SK-N-SH (cell line): ENCODE measurements at regions of chr2 and their contacts with region 1.

Region 1: GRCh38 chr2:74833418-74834233 is at the start of gene HK2:
- DNase-seq: peak; percentile 99
- H3K4me3 ChIP-seq: peak within 1 kb of the TSS; percentile 83 to 85
- H3K27ac ChIP-seq: peak within 1 kb of the TSS; percentile 11 to 77; a peak in 3 of 4 replicates
- H3K4me1 ChIP-seq: peaks cover 0 to 25% of the 10 kb centered on the region in 2 experiments; a peak in 1 of 4 replicates
- H3K27me3 ChIP-seq: no peaks in the 10 kb centered on the region
- CTCF ChIP-seq: no peak
- EP300 ChIP-seq: no peak
- RAD21 ChIP-seq: 0 out of 2 replicates have a peak, but pooled peaks have one; percentile 6
- polyA plus RNA-seq, gene HK2: 13.5 and 15.1 TPM in 2 replicates

Region 2: DNA sequence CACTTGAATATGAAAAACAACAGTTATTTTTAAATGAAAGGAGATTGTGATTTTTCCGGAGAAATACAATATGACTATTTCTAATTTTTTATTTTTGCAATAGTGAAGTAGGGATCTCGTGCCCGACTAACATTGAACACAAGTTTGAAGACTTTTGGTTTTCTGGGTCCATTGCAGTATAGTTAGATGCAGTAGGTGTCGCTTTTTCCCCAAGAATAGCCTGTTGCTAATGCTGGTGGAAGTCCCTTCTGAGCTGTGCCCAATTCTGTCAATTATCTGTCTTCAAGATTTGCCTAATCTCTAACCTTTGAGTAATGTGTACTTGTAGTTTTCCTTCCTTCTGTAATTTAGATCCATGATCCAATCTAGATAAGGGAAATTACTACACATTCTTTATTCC is 143.1 kb before region 1 on chr2:
- CTCF ChIA-PET with region 1: interaction called, 13 read pairs
- POLR2A ChIA-PET with region 1: no interaction called
- DNase-seq: peak; percentile 68
- H3K4me3 ChIP-seq: no peak overlapping the region
- H3K27ac ChIP-seq: no peak overlapping the region
- H3K4me1 ChIP-seq: no peaks in the 10 kb centered on the region; a peak in 1 of 4 replicates
- H3K27me3 ChIP-seq: no peaks in the 10 kb centered on the region
- CTCF ChIP-seq: peak; percentile 92
- EP300 ChIP-seq: no peak
- RAD21 ChIP-seq: peak; percentile 98

Region 3: GRCh38 chr2:74740389-74741075 is 93.1 kb before region 1 on chr2:
- CTCF ChIA-PET with region 1: interaction called, 14 read pairs
- POLR2A ChIA-PET with region 1: interaction called, 3 read pairs
- DNase-seq: no peak
- H3K4me3 ChIP-seq: peak overlapping the region in 1 of 2 experiments; percentile 8; a peak in 1 of 4 replicates
- H3K27ac ChIP-seq: peak overlapping the region; percentile 53 to 62; a peak in 3 of 4 replicates
- H3K4me1 ChIP-seq: peaks cover 24 to 29% of the 10 kb centered on the region in 2 experiments
- H3K27me3 ChIP-seq: no peaks in the 10 kb centered on the region
- CTCF ChIP-seq: no peak
- EP300 ChIP-seq: peak in 1 of 2 experiments; percentile 67; a peak in 1 of 4 replicates
- RAD21 ChIP-seq: no peak

Region 4: DNA sequence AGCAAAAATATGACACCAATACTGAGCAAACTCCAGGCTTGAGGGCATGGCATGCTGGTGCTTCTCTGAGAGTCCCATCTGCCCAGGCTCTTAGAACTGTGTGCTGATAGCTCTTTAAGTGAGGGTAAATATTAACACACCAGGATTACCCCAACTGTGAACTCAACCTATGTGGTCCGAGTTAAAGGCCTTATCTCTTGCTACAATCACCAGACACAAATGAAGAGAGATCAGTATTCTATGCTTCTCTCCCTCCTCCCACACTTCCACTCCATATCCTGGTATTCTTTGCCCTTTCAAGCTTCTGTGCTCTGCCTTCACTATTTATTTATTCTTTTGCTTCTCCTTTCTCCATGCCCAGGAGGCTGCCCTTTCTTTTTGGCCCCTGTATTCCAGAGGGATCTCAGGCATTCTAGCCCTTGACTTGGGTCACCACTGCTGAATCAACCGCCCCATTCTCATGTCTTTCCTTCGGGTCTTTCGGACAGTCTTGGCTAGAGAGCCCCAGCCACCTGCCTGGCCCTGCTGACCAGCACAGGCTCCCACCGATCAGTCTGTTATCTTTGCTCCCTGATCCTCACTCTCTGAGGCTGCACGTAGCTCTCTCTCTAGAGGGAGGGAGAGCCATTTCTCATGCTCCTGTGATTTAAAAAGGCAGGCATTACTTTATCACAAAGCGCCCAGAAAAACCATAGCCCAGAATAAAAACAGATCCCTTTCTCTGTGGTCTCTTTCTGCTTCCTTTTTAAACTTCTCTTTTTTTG is 16.9 kb before region 1 on chr2:
- CTCF ChIA-PET with region 1: interaction called, 26 read pairs
- POLR2A ChIA-PET with region 1: interaction called, 13 read pairs
- DNase-seq: peak; percentile 61
- H3K4me3 ChIP-seq: no peak overlapping the region; a peak in 1 of 4 replicates
- H3K27ac ChIP-seq: peak overlapping the region in 1 of 2 experiments; percentile 95; a peak in 2 of 4 replicates
- H3K4me1 ChIP-seq: peaks cover 0 to 16% of the 10 kb centered on the region in 2 experiments; a peak in 2 of 4 replicates
- H3K27me3 ChIP-seq: peaks cover 10% of the 10 kb centered on the region; the same call in 1 of the 2 replicates
- CTCF ChIP-seq: no peak
- EP300 ChIP-seq: peak in 1 of 2 experiments; percentile 60; a peak in 2 of 4 replicates
- RAD21 ChIP-seq: no peak; the same call in 1 of the 2 replicates

Region 5: GRCh38 chr2:74849228-74849892 is 15.7 kb after region 1 on chr2:
- CTCF ChIA-PET with region 1: interaction called, 26 read pairs
- POLR2A ChIA-PET with region 1: no interaction called
- DNase-seq: no peak
- H3K4me3 ChIP-seq: no peak overlapping the region
- H3K27ac ChIP-seq: no peak overlapping the region
- H3K4me1 ChIP-seq: peaks cover 36 to 50% of the 10 kb centered on the region in 2 experiments; a peak in 3 of 4 replicates
- H3K27me3 ChIP-seq: no peaks in the 10 kb centered on the region
- CTCF ChIP-seq: no peak
- EP300 ChIP-seq: no peak
- RAD21 ChIP-seq: no peak

Region 6: DNA sequence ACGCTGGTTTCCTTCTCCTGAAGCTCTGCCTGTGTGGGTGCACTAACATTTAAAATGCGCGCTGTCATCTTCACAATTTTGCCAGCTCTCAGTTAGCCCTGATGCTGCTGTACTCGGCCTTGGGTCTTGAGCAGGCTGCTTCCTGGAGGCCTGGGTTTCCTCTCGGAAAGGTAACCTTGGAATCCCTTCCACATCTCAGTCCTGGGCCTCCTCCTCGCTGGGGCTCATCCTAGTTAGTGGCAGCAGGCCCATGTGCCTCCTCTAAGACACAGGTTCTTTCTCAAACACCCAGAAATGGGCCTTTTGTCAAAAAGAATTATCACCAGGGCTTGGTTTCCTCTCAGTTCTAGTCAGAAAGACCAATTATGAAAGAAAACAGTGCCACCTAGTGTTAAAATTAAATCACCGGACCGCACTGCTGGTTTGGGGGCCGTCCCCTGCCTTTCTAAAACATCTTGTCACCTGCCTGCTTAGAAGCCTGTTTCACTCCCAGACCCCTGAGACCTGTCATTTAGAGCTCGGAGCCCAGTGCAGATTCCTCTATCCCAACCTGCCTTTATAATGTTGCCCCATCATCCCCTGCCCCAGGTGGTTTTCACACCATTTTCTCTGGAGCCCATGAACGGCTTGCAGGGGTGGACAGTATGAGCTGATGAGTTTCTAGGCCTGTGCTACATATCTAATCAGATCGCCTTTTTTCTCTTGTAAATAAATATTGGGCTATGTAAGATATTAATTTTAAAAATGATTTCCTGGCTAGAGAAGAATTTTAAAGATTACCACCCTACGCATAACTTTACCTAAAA is 42.7 kb after region 1 on chr2:
- CTCF ChIA-PET with region 1: interaction called, 66 read pairs
- POLR2A ChIA-PET with region 1: no interaction called
- DNase-seq: peak; percentile 81
- H3K4me3 ChIP-seq: no peak overlapping the region; a peak in 1 of 4 replicates
- H3K27ac ChIP-seq: peak overlapping the region in 1 of 2 experiments; percentile 39; a peak in 1 of 4 replicates
- H3K4me1 ChIP-seq: peaks cover 0 to 3% of the 10 kb centered on the region in 2 experiments; a peak in 1 of 4 replicates
- H3K27me3 ChIP-seq: no peaks in the 10 kb centered on the region
- CTCF ChIP-seq: peak; percentile 79
- EP300 ChIP-seq: no peak
- RAD21 ChIP-seq: peak; percentile 86

Region 7: GRCh38 chr2:74975016-74975415 is 141.4 kb after region 1 on chr2:
- CTCF ChIA-PET with region 1: no interaction called
- POLR2A ChIA-PET with region 1: no interaction called
- DNase-seq: no peak
- H3K4me3 ChIP-seq: no peak overlapping the region
- H3K27ac ChIP-seq: no peak overlapping the region
- H3K4me1 ChIP-seq: no peaks in the 10 kb centered on the region; a peak in 1 of 4 replicates
- H3K27me3 ChIP-seq: no peaks in the 10 kb centered on the region
- CTCF ChIP-seq: no peak
- EP300 ChIP-seq: no peak
- RAD21 ChIP-seq: no peak